Activated naive CD4-positive, alpha-beta T cell treated with anti-CD3 and anti-CD28 coated beads for 36 hours (primary cell): ENCODE measurements at regions of chr22 and their contacts with region 1.

Region 1: GRCh38 chr22:28829358-28830181 is 29.2 kb upstream of the XBP1 start:
- DNase-seq: peak; percentile 86
- H3K4me3 Mint-ChIP-seq: no peak overlapping the region
- H3K27ac Mint-ChIP-seq: no peak overlapping the region
- H3K4me1 Mint-ChIP-seq: peaks cover 10% of the 10 kb centered on the region
- H3K27me3 Mint-ChIP-seq: no peaks in the 10 kb centered on the region

Region 2: GRCh38 chr22:28521451-28521850 is 308.1 kb before region 1 on chr22:
- CTCF ChIA-PET with region 1: no interaction called
- intact Hi-C with region 1: no loop called
- DNase-seq: no peak
- H3K4me3 Mint-ChIP-seq: no peak overlapping the region
- H3K27ac Mint-ChIP-seq: no peak overlapping the region
- H3K4me1 Mint-ChIP-seq: no peaks in the 10 kb centered on the region
- H3K27me3 Mint-ChIP-seq: peaks cover 13% of the 10 kb centered on the region

Region 3: DNA sequence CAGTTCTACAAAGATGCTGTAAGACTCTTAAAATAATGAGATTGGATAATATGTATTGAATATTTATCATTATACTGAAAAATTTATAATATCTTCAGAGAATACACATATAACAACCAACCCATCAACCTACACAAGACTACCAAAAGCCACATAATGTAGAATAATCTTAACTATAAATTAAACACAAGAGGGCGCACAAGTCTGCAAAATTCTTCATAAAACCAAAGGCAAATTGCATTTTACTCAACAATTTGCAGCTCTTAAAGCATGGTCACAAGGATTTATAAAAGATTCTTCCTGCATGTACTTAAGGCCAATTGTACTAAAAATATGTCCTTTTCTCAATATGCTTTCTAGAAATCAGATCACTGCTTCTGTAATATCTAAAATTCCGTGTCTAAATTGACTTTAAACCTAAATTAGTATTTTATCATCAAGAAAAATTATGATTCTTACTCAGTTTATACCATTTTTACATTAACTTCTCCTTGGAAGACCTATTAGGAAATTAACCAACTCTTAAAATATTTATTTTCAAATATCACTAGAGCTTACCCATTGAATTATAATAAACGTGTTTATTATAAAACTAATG is 228.9 kb before region 1 on chr22:
- CTCF ChIA-PET with region 1: interaction called, 48 read pairs
- intact Hi-C with region 1: loop called (anchors 1 kb)
- DNase-seq: no peak
- H3K4me3 Mint-ChIP-seq: no peak overlapping the region
- H3K27ac Mint-ChIP-seq: no peak overlapping the region
- H3K4me1 Mint-ChIP-seq: no peaks in the 10 kb centered on the region
- H3K27me3 Mint-ChIP-seq: peaks cover 7% of the 10 kb centered on the region

Region 4: DNA sequence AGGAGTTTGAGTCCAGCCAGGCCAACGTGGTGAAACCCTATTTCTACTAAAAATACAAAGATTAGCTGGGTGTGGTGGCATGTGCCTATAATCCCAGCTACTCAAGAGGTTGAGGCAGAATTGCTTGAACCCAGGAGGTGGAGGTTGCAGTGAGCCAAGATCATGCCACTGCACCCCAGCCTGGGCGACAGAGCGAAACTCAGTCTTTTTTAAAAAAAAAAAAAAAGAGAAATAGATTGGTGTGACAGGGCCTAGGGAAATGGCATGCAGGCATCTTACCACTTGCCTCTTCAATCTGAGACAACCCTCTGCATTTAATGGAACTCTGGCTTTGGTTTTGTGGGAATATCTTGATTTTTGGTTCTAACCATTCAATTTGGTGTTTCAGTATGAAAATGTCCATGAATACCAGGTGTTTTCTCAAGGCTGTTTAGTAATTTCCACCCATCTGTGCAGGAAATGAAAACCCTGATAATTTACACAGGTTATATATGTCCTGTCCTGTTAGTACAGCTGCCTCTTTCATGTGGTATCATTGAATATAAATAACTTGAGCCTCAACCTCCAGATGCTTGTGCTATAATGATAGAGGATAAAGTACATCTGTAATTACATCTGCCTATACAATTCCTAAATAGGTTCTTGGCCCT is 37.6 kb before region 1 on chr22:
- CTCF ChIA-PET with region 1: interaction called, 31 read pairs
- intact Hi-C with region 1: loop called (anchors 1 kb)
- DNase-seq: no peak
- H3K4me3 Mint-ChIP-seq: no peak overlapping the region
- H3K27ac Mint-ChIP-seq: no peak overlapping the region
- H3K4me1 Mint-ChIP-seq: peaks cover 42% of the 10 kb centered on the region
- H3K27me3 Mint-ChIP-seq: no peaks in the 10 kb centered on the region

Region 5: DNA sequence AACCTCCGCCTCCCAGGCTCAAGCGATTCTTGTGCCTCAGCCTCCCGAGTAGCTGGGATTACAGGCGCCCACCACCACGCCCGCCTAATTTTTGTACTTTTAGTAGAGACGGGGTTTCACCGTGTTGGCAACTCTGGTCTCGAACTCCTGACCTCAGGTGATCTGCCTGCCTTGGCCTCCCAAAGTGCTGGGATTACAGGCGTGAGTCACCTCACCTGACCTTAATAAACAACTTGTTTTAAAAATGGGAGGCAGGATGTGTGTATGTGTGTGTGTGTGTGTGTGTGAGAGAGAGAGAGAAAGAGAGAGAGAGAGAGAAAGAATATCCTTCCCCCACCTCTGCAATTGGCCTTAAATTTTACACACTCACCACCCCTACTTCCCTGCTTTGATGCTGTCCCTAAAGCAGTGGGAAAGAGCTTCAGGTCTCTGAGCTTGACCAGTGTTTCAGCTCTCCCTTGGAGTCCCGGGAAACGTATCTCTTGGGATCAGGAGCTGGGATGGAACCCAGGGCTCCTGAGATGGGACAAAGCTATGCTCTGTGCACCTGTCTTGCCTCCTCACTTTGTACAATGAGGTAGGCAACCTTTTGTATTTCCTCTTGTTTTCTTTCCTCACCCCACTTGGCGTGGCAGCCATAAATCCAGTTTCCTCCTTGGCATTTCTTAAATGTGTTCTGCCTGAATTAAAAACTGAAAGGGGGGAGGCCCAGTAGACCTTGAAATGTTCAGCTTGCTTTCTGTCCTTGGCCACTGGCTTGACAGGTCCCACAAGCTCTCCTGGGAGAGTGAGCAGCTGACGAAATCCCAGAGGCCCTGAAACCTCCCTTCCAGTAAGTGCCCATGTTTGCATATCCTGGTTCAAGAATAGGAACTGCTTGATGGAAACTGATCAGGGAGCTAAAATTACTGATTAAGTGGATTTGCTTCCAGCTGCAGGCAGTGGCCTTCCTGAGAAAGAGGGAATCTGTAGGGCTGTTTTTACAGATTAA is 11.4 kb before region 1 on chr22:
- CTCF ChIA-PET with region 1: interaction called, 34 read pairs
- intact Hi-C with region 1: no loop called
- DNase-seq: peak; percentile 54
- H3K4me3 Mint-ChIP-seq: no peak overlapping the region
- H3K27ac Mint-ChIP-seq: peak overlapping the region; percentile 30
- H3K4me1 Mint-ChIP-seq: peaks cover 71% of the 10 kb centered on the region
- H3K27me3 Mint-ChIP-seq: no peaks in the 10 kb centered on the region

Region 6: GRCh38 chr22:28899199-28899853 is 69.8 kb after region 1 on chr22:
- CTCF ChIA-PET with region 1: no interaction called
- intact Hi-C with region 1: no loop called
- DNase-seq: peak; percentile 58
- H3K4me3 Mint-ChIP-seq: no peak overlapping the region
- H3K27ac Mint-ChIP-seq: no peak overlapping the region
- H3K4me1 Mint-ChIP-seq: peaks cover 18% of the 10 kb centered on the region
- H3K27me3 Mint-ChIP-seq: peaks cover 11% of the 10 kb centered on the region